ENCODE measurements at regions of chr17 and their contacts with region 1.

Region 1: DNA sequence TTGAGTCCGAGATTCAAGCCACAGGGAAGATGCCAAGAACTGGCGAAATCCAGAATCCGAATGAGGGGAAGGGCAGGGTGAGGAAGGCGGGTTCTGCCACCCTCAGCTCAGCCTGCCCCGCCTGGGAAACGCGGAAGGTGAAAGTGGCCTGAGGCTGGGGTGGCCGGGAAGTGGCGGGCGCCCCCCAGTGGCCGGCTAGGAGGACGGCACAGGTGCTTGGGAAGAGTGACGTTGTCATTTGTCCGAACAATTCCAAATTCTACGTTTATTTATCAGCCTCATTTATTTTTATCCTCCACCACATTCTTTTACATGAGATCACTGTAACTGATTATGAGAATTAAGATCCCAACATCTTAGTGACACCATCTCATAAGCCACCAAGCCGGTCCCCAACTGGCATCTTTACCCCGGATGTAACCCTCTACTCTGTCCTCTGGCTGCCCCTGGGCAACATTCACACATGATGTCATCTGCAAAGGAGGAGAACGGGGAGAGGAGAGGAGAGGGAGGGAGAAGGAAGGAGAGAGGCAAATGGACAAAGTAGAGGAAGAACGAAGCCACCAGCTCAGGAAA is 21.3 kb downstream of the SRCIN1 start:
- DNase-seq: peak in 9 of 10 donors; percentile 61 to 96 (median 71)

Region 2: GRCh38 chr17:38498186-38498752 is 86.2 kb before region 1 on chr17:
- intact Hi-C with region 1: loop called (anchors 10 kb)
- DNase-seq: peak in 3 of 10 donors; percentile 55 to 80 (median 77)

Region 3: DNA sequence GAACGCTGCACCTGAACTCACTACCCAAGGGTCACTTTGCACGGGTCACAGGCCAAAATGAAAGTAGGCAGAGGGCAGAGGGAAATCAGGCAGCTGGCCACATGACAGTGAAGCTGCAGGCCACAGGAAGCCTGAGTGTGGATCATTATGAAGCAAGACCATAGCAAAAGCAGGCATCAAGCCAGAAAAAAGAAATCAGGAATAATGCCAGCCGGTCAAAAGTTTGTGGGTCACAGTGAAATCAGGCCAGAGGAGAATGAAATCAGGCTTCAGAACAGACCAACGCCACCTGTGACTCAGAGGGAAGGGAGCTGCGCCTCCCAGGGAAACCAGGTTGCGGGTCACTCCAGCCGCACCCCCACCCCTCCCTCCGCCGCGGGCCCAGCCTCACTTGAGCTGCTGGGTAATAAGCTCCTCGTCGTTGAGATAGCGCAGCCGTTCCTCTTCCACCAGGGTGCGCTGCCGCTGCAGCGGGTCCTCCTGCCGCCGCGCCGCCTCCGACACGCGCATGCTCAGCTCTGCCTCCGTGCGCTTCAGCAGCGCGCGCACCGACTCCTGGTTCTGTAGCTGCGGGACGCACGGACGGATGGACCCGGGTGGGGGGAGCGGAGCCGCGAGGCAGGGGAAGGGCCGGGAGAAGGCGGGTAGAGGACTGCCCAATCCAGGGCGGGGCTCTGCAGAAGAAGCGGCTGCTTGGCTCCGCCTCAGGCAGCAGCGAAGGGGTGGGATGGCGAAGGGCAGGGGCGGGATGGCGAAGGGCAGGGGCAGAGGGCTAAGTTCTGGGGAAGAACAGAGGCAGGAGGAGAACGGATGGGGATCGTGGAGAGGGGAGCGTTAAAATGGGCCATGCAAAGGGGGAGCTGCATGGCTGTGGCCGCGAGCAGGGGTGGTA is 26.4 kb before region 1 on chr17:
- intact Hi-C with region 1: loop called (anchors 2 kb)
- DNase-seq: peak; percentile 85 to 99 (median 90)

Region 4: GRCh38 chr17:38809828-38810227 is 225.4 kb after region 1 on chr17:
- intact Hi-C with region 1: no loop called
- DNase-seq: peak in 6 of 10 donors; percentile 17 to 83 (median 40)